ENCODE measurements at regions of chr1 and their contacts with region 1.

Region 1: DNA sequence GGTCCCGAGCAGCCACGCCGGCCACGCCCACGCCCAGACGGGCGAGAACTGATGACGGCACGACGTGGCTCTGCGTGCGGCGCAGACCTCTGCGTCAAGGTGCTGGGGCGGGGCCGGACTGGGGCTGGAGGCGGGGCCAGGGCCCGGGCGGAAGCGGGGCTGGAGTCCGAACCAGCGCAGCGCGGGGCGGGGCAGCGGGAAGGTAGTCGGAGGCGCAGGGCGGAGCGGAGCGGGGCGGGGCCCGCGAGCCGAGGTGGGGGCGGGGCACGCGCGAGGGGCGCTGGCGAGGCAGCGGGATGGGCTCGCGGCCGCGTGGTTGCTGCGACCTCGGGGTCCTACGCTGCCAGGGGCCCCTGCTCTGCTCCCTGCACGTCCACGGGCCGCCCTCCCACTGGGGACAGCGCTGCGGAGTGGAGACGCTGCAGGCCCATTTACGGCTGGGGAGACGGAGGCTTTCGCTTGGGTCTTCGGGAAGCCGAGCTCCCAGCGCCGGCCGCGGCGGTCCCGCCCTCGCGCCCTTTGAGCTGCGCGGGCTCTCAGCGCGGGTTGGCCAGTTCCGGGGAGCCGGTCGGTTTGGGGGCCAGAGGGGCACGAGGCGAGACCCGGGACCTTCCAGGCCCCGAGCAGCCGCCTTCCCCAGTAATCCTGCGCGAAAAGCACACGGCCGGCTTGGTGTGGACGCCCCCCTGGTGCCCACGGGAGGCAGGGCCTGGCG is at the start of gene PEX10:
- DNase-seq: peak; percentile 96 to 99
- H3K4me3 ChIP-seq: peak within 1 kb of the TSS; percentile 76 to 90
- H3K27ac ChIP-seq: peak within 1 kb of the TSS; percentile 82 to 95
- H3K4me1 ChIP-seq: peaks cover 0 to 38% (median 26%) of the 10 kb centered on the region in 4 donors
- H3K27me3 ChIP-seq: peaks cover 0 to 26% of the 10 kb centered on the region in 2 donors
- CTCF ChIP-seq: peak in 1 of 2 experiments; percentile 4

Region 2: DNA sequence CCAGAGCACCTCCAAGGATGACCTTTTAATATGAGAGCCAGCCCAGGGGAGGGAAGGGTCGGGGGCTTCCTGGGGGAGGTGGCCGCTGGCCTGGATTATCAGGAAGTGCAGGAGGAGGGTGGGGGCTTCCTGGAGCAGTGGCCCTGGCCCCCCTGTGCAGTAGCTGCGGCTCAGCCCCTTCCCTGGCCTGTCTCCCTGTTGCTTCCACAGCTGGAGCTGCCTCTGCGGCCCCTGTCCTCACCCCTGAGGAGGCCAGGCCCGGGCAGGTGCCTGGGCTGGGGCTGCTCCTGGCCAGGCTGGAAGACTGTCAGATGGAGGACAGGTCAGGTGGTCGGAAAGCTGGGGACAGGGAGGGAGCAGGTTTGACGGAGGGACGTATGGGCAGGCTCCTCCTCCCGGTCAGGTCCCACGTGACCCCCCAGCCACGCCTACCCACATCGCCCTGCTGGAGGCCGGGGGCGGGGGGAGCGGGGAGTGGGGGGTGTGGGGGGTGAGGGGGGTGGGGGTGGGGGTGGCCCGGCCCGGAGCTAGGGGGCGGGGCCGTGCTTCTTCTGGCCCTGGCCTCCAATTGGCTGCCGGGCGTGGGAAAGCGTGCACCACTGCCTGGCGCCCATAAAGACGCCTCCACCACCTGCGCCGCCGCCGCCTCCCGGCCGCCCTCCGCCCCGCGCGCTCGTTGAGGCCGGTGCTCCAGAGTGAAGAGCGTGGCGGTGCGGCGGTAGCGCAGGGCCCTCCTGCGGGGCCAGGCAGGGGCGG is 133.3 kb after region 1 on chr1:
- intact Hi-C with region 1: loop called (anchors 2 kb)
- DNase-seq: peak; percentile 88 to 94
- H3K4me3 ChIP-seq: peak overlapping the region; percentile 56 to 64
- H3K27ac ChIP-seq: peak overlapping the region; percentile 95 to 97
- H3K4me1 ChIP-seq: peaks cover 0 to 70% (median 42%) of the 10 kb centered on the region in 4 donors
- H3K27me3 ChIP-seq: peaks cover 0 to 56% of the 10 kb centered on the region in 2 donors
- CTCF ChIP-seq: no peak

Region 3: GRCh38 chr1:2586154-2587070 is 173.7 kb after region 1 on chr1 and contains the start of gene PRXL2B:
- intact Hi-C with region 1: loop called (anchors 10 kb)
- DNase-seq: peak; percentile 99 to 100
- H3K4me3 ChIP-seq: peak within 1 kb of the TSS; percentile 93 to 98
- H3K27ac ChIP-seq: peak within 1 kb of the TSS; percentile 91 to 98
- H3K4me1 ChIP-seq: peaks cover 5 to 37% (median 19%) of the 10 kb centered on the region in 4 donors
- H3K27me3 ChIP-seq: peaks cover 0 to 13% of the 10 kb centered on the region in 2 donors
- CTCF ChIP-seq: no peak

Region 4: GRCh38 chr1:2786329-2787162 is 373.9 kb after region 1 on chr1:
- intact Hi-C with region 1: loop called (anchors 2 kb)
- DNase-seq: peak in 1 of 2 donors; percentile 71
- H3K4me3 ChIP-seq: no peak overlapping the region
- H3K27ac ChIP-seq: no peak overlapping the region
- H3K4me1 ChIP-seq: peaks cover 0 to 6% (median 0%) of the 10 kb centered on the region in 4 donors
- H3K27me3 ChIP-seq: peaks cover 0 to 65% of the 10 kb centered on the region in 2 donors
- CTCF ChIP-seq: peak; percentile 54 to 60

Region 5: GRCh38 chr1:3889936-3890335 is 1477.3 kb after region 1 on chr1:
- intact Hi-C with region 1: loop called (anchors 5 kb)
- DNase-seq: no peak
- H3K4me3 ChIP-seq: no peak overlapping the region
- H3K27ac ChIP-seq: no peak overlapping the region
- H3K4me1 ChIP-seq: peaks cover 0 to 8% (median 5%) of the 10 kb centered on the region in 4 donors
- H3K27me3 ChIP-seq: no peaks in the 10 kb centered on the region
- CTCF ChIP-seq: no peak